ENCODE measurements at regions of chr9 and their contacts with region 1.

Region 1: DNA sequence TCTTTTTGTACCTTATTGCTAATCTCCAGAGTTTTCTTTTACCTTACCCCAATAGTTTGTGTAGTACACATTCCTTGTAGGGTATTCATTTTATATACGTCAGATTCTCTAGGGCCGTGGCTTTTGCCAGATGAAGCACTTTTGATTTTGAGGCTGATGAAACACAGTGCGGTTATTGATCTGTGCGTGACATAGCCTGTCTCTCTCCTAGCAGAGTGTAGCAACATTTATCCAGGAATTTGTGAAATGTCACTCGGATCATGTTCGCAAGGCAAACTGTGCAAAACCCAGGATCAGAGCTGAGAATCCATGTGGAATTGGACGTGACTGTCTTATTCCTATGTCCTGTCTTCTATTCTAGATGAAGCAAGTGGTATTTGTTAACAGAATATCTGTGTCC is 142.0 kb upstream of the SH3GL2 start:
- DNase-seq: no peak
- ATAC-seq: no peak
- H3K4me3 ChIP-seq: no peak overlapping the region
- H3K27ac ChIP-seq: no peak overlapping the region
- H3K4me1 ChIP-seq: no peaks in the 10 kb centered on the region
- H3K27me3 ChIP-seq: no peaks in the 10 kb centered on the region
- CTCF ChIP-seq: no peak
- POLR2A ChIP-seq: no peak

Region 2: DNA sequence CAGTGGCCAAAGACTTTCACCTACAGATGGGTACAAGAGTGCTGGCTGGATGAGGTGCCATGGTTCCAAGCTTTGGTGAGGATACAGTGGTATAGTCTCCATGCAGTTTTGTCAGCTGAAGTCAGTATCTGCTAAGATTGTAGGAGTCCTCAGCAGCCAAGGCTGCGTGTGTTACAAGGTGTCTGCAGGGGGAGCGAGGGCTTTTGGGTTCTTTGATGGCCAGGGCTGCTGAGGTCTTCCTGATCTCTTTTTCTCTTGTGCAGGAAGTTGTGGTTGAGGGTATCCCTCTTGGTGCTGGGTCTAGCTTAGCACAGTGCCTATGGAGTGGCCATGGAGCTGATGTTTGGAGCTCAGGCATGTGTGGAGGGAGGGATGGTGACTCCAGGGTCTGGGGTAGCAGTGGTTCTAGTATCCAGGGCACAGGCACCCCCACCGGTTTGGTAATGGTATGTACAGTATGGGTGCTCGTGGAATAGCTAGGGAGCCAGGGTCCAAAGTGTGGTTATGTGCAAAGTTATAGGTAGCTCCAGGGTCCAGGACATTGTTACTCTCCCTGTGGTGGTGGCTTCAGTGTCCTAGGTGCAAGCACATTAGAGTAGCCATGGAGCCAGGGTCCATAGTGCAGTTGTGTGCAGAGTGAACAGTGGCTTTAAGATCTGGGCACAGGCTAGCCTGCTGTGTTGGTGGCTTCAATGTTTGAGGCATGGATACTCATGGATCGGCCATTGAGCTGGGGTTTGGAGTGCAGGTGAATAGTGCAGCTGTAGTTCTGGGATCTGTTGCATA is 265.4 kb before region 1 on chr9:
- intact Hi-C with region 1: no loop called
- DNase-seq: no peak
- ATAC-seq: no peak
- H3K4me3 ChIP-seq: no peak overlapping the region
- H3K27ac ChIP-seq: no peak overlapping the region
- H3K4me1 ChIP-seq: no peaks in the 10 kb centered on the region
- H3K27me3 ChIP-seq: no peaks in the 10 kb centered on the region
- CTCF ChIP-seq: no peak
- POLR2A ChIP-seq: no peak

Region 3: DNA sequence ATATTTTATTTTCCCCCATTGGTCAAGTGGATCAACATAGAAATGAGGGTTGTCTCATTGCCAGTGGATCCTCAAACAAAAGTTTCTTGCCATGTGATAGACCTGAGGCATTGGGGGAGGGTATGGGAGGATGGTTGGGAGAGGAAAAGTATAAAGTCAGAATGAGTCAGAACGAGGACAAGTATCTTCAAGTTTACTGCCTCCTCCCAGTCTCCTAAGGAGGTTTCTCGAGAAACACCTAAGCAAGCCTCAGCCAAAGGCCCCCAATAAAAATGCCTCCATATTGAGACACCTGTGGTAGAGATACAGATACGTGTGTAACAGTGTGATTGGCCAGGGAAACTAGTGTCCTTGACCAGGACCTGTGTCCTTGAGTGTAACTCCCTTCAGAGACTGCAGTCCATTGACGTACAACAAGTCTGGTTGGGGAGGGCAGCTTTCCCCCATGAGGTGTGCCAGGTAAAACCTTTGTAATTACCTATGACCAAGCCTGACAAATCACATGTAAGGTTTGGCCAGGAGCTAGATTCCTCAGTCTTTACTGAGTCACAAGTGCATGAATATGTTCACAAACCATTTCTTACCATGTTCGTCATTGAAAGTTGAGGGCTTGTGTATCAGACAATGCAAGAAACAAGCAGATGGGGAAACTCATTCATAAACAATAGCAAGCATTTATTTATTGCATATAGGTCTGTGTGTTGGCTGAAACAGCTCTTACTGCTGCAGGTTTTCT is 56.6 kb before region 1 on chr9:
- intact Hi-C with region 1: loop called in 1 of 10 experiments (anchors 10 kb)
- DNase-seq: no peak
- ATAC-seq: no peak
- H3K4me3 ChIP-seq: no peak overlapping the region
- H3K27ac ChIP-seq: no peak overlapping the region
- H3K4me1 ChIP-seq: no peaks in the 10 kb centered on the region
- H3K27me3 ChIP-seq: no peaks in the 10 kb centered on the region
- CTCF ChIP-seq: no peak
- POLR2A ChIP-seq: no peak

Region 4: DNA sequence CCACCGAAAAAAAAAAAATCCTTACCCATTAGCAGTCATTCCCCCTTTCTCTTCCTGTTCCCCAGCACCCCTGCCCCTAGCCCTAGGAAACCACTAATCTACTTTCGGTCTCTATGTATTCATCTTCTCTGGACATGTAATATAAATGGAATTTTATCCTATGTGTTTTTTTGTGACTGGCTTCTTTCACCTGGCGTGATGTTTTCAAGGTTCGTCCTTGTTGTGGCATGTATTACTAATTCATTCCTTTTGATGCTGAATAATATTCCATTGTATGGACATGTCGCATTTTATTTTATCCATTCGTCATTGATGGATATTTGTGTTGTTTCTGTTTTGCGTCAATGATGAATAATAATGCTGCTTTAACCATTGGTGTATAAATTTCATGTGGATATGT is 99.2 kb after region 1 on chr9:
- intact Hi-C with region 1: no loop called
- DNase-seq: no peak
- ATAC-seq: no peak
- H3K4me3 ChIP-seq: no peak overlapping the region
- H3K27ac ChIP-seq: no peak overlapping the region
- H3K4me1 ChIP-seq: peaks cover 0 to 3% (median 0%) of the 10 kb centered on the region in 12 donors
- H3K27me3 ChIP-seq: no peaks in the 10 kb centered on the region
- CTCF ChIP-seq: no peak
- POLR2A ChIP-seq: no peak